ENCODE measurements at regions of chr3 and their contacts with region 1.

Region 1: GRCh38 chr3:150703299-150704134 is at the start of gene ERICH6:
- DNase-seq: peak; percentile 90
- H3K4me3 ChIP-seq: peak within 1 kb of the TSS; percentile 43 to 78 (median 68)
- H3K27ac ChIP-seq: peak within 1 kb of the TSS; percentile 72
- H3K4me1 ChIP-seq: peaks cover 7% of the 10 kb centered on the region
- H3K27me3 ChIP-seq: no peaks in the 10 kb centered on the region
- CTCF ChIP-seq: peak in 1 of 2 donors; percentile 12
- POLR2A ChIP-seq: peak; percentile 58
- total RNA-seq, gene ERICH6: not detected in 2 replicates

Region 2: GRCh38 chr3:149752051-149752787 is 951.3 kb before region 1 on chr3 and contains the start of gene COMMD2:
- CTCF ChIA-PET with region 1: no interaction called
- POLR2A ChIA-PET with region 1: no interaction called
- dilution Hi-C with region 1: no loop called
- intact Hi-C with region 1: no loop called
- DNase-seq: peak; percentile 83
- H3K4me3 ChIP-seq: peak within 1 kb of the TSS; percentile 74 to 94 (median 91)
- H3K27ac ChIP-seq: peak within 1 kb of the TSS; percentile 33
- H3K4me1 ChIP-seq: peaks cover 15% of the 10 kb centered on the region
- H3K27me3 ChIP-seq: no peaks in the 10 kb centered on the region
- CTCF ChIP-seq: peak in 1 of 2 donors; percentile 17
- POLR2A ChIP-seq: peak; percentile 86
- total RNA-seq, gene COMMD2: 42.9 and 51.0 TPM in 2 replicates

Region 3: DNA sequence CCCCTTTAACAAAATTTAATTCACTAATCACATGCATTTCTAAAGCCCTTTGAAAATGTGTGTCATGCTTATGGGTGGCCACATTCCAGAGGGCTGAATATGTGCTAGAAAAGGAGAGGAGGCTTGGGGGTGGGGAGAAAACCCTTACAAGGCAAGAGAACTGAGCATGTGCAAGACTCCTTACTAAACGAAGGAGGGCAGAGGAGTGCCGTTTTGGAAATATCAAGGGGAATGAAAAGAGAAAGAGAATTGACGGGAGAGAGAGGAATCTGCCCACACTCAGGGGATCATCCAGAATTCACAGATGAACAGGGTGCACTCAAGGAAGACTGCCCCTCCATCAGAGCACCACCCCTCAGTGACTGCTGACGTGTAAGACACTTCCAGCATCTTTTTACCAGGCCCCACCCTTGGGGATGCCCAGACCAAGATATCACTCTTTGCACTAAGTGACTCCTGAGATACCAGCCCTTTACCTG is 333.4 kb before region 1 on chr3:
- CTCF ChIA-PET with region 1: no interaction called
- POLR2A ChIA-PET with region 1: no interaction called
- dilution Hi-C with region 1: no loop called
- intact Hi-C with region 1: no loop called
- DNase-seq: peak; percentile 91
- H3K4me3 ChIP-seq: peak overlapping the region; percentile 22 to 91 (median 28)
- H3K27ac ChIP-seq: peak overlapping the region; percentile 94
- H3K4me1 ChIP-seq: peaks cover 39% of the 10 kb centered on the region
- H3K27me3 ChIP-seq: no peaks in the 10 kb centered on the region
- CTCF ChIP-seq: no peak
- POLR2A ChIP-seq: peak; percentile 51

Region 4: DNA sequence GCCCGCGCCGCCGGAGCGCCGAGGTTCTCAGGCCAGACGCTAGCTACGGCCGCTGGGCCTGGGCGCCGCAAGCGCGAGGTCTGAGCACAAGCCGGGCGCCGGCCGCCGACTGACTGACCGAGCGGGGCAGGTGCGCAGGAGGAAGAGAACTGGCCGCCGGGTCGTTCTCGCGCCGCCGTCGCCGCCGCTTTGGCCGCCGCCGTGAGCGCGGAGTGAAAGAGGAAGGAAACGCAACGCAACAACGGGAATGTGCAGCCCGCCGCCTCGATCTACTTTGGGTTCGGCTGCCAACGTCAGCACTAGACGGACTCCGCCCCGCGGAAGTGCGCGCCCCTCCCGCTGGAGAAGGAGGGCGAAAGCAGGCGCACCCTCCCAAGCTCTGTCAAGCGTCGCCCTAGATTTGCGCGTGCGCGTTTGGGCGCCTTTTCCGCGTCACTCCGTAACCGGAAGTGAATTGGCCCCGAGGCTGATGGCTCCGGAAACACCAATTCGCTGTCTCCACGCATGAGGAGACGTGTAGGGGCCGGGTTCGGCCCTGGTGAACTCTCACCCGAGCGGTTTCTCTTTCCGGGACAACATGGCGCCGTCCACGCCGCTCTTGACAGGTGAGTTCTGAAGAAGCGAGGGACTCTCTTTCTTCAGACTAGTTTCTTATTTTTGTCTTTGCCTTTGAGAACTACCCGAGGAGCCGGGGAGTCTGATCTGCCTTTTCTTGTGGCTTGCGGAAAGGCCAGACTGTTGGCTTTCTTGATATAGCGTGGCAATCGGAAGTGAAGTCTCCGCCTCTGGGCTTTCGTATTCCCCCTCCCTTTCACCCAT is 157.1 kb before region 1 on chr3 and contains the starts of genes EIF2A and SERP1:
- CTCF ChIA-PET with region 1: no interaction called
- POLR2A ChIA-PET with region 1: no interaction called
- dilution Hi-C with region 1: no loop called
- intact Hi-C with region 1: loop called (anchors 10 kb)
- DNase-seq: peak; percentile 100
- H3K4me3 ChIP-seq: peak within 1 kb of the TSS; percentile 80 to 98 (median 93)
- H3K27ac ChIP-seq: peak within 1 kb of the TSS; percentile 97
- H3K4me1 ChIP-seq: peaks cover 25% of the 10 kb centered on the region
- H3K27me3 ChIP-seq: no peaks in the 10 kb centered on the region
- CTCF ChIP-seq: no peak
- POLR2A ChIP-seq: peak; percentile 85
- total RNA-seq, gene EIF2A: 97.6 and 104 TPM in 2 replicates
- total RNA-seq, gene SERP1: 81.7 and 82.0 TPM in 2 replicates

Region 5: DNA sequence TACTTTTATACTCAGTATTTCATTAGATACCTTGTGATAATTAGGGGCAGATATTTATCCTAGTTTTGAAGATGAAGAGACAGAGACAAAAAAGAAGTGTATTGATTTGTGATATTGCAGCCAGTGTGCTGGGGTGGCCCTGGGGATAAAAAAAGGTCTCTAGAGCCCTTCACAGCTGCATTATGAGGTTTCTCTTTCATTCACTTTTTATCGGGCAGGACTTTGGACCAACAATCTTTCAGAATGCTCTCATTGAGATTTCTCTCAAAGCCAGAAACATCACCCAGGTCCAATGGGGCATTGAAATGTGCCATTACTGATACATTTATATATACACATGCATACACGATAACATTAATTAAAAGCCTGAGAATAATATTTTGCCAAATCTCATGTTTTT is 120.9 kb before region 1 on chr3:
- CTCF ChIA-PET with region 1: no interaction called
- POLR2A ChIA-PET with region 1: interaction called, 10 read pairs
- dilution Hi-C with region 1: no loop called
- intact Hi-C with region 1: no loop called
- DNase-seq: no peak
- H3K4me3 ChIP-seq: no peak overlapping the region
- H3K27ac ChIP-seq: no peak overlapping the region
- H3K4me1 ChIP-seq: no peaks in the 10 kb centered on the region
- H3K27me3 ChIP-seq: no peaks in the 10 kb centered on the region
- CTCF ChIP-seq: no peak
- POLR2A ChIP-seq: no peak

Region 6: GRCh38 chr3:150733373-150733935 is 29.9 kb after region 1 on chr3:
- CTCF ChIA-PET with region 1: no interaction called
- POLR2A ChIA-PET with region 1: no interaction called
- dilution Hi-C with region 1: no loop called
- intact Hi-C with region 1: no loop called
- DNase-seq: no peak
- H3K4me3 ChIP-seq: no peak overlapping the region
- H3K27ac ChIP-seq: no peak overlapping the region
- H3K4me1 ChIP-seq: no peaks in the 10 kb centered on the region
- H3K27me3 ChIP-seq: no peaks in the 10 kb centered on the region
- CTCF ChIP-seq: no peak
- POLR2A ChIP-seq: no peak

Measured in endothelial cell of umbilical vein (primary cell).